AG04450 (cell line): ENCODE measurements at regions of chr20 and their contacts with region 1.

Region 1: DNA sequence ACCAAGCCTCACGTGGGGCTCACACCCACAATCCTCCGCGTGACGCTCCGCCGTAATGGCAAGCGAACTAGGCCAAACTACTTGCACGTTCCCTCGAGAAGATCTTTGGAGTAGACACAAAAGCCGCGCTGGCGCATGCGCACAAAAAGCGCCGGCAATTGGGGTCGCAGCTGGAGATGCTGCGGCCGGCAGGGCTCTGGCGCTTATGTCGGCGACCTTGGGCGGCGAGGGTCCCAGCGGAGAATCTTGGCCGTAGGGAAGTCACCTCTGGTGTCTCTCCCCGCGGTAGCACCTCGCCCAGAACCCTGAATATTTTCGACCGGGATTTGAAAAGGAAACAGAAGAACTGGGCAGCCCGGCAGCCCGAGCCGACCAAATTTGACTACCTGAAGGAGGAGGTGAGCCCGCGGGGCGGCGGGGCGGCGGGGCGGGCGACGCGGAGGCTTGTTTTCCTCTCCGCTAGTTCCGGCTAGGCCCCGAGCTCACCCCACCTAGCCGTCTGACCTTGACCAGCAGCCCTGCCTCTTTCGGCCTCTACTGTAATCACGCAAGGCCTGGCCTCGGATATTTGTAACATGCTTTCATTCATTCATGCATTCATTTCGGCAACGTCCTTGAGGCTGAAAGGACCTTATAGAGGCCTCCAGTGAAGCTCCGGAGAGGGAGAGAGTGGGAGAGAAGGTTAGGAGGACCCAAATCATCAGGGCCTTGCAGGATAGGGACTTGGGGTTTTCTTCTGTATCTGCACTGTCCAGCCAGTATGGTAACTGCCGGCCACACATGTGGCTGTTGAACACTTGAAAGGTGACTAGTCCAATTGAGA is at the starts of genes ESF1 and NDUFAF5:
- DNase-seq: peak; percentile 94
- H3K4me3 ChIP-seq: peak within 1 kb of the TSS; percentile 90
- H3K27ac ChIP-seq: peak within 1 kb of the TSS; percentile 62
- H3K27me3 ChIP-seq: no peaks in the 10 kb centered on the region
- CTCF ChIP-seq: no peak
- polyA plus RNA-seq, gene ESF1: 3.8 and 6.2 TPM in 2 replicates
- polyA plus RNA-seq, gene NDUFAF5: 18.4 and 24.1 TPM in 2 replicates

Region 2: GRCh38 chr20:13800728-13801134 is 15.6 kb after region 1 on chr20:
- CTCF ChIA-PET with region 1: interaction called, 30 read pairs
- POLR2A ChIA-PET with region 1: interaction called, 3 read pairs
- DNase-seq: peak; percentile 78
- H3K4me3 ChIP-seq: no peak overlapping the region
- H3K27ac ChIP-seq: no peak overlapping the region
- H3K27me3 ChIP-seq: no peaks in the 10 kb centered on the region
- CTCF ChIP-seq: no peak